Mammary epithelial cell (primary cell): ENCODE measurements at regions of chr1 and their contacts with region 1.

Region 1: GRCh38 chr1:243701872-243702271 is 148.2 kb downstream of the AKT3 start:
- DNase-seq: no peak
- H3K4me3 ChIP-seq: no peak overlapping the region
- H3K27ac ChIP-seq: no peak overlapping the region
- H3K4me1 ChIP-seq: no peaks in the 10 kb centered on the region
- H3K27me3 ChIP-seq: no peaks in the 10 kb centered on the region
- CTCF ChIP-seq: no peak

Region 2: GRCh38 chr1:243542739-243543415 is 159.0 kb before region 1 on chr1:
- CTCF ChIA-PET with region 1: interaction called, 12 read pairs
- dilution Hi-C with region 1: no loop called
- in situ Hi-C with region 1: no loop called
- intact Hi-C with region 1: no loop called
- DNase-seq: no peak
- H3K4me3 ChIP-seq: no peak overlapping the region
- H3K27ac ChIP-seq: no peak overlapping the region
- H3K4me1 ChIP-seq: no peaks in the 10 kb centered on the region
- H3K27me3 ChIP-seq: no peaks in the 10 kb centered on the region
- CTCF ChIP-seq: no peak

Region 3: DNA sequence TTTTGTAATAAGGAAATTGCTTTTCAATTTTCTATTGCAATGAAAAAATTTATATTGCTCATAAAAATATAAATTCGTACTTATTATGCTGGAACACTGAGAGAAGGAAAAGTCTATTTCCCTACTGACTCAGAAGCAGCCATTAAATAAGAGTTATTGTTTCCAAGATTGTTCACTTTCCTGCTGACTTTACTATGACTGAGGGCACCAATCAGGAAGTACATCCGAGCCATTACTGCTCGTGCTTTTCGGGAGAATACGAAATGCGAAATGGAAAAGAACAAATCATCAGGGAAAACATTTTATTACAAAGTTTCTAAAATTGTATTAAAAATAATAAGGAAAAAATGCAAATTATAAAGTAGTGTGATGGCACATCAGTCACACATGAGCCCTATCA is 56.6 kb before region 1 on chr1:
- CTCF ChIA-PET with region 1: no interaction called
- dilution Hi-C with region 1: no loop called
- in situ Hi-C with region 1: no loop called
- intact Hi-C with region 1: no loop called
- DNase-seq: no peak
- H3K4me3 ChIP-seq: no peak overlapping the region
- H3K27ac ChIP-seq: no peak overlapping the region
- H3K4me1 ChIP-seq: no peaks in the 10 kb centered on the region
- H3K27me3 ChIP-seq: no peaks in the 10 kb centered on the region
- CTCF ChIP-seq: no peak